GM12878 (cell line): ENCODE measurements at regions of chr13 and their contacts with region 1.

Region 1: DNA sequence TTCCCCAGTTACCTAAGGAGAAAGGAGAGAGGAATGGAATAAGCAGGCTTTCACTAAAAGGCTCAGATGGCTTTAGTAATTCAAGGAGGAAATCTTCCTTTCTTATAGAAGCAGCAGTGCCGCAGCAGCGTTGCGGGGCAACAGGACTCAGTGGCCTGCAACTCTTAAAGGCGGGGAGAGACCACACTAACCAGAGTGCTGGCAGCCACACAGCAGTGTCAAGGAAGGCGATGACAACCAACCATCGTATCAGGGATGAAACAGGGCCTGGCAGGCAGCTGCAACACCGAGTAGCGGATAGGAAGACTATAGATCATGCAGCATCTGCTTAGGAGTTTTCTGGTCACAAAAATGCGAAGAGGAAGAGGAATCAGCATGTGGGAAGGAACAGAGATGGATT is 106.0 kb downstream of the ERCC5 start:
- DNase-seq: no peak
- ATAC-seq: no peak
- H3K4me3 ChIP-seq: no peak overlapping the region
- H3K27ac ChIP-seq: no peak overlapping the region
- H3K4me1 ChIP-seq: no peaks in the 10 kb centered on the region
- H3K27me3 ChIP-seq: no peaks in the 10 kb centered on the region
- CTCF ChIP-seq: no peak
- EP300 ChIP-seq: no peak
- POLR2A ChIP-seq: no peak
- RAD21 ChIP-seq: no peak

Region 2: GRCh38 chr13:102970542-102970941 is 18.7 kb after region 1 on chr13:
- CTCF ChIA-PET with region 1: interaction called, 4 read pairs
- POLR2A ChIA-PET with region 1: no interaction called
- RAD21 ChIA-PET with region 1: no interaction called
- SMC1A ChIA-PET with region 1: interaction called, 20 read pairs
- in situ Hi-C with region 1: no loop called
- intact Hi-C with region 1: no loop called
- DNase-seq: peak; percentile 92
- ATAC-seq: peak; percentile 94
- H3K4me3 ChIP-seq: no peak overlapping the region
- H3K27ac ChIP-seq: peak overlapping the region; percentile 69
- H3K4me1 ChIP-seq: peaks cover 26% of the 10 kb centered on the region
- H3K27me3 ChIP-seq: no peaks in the 10 kb centered on the region
- CTCF ChIP-seq: no peak
- EP300 ChIP-seq: peak; percentile 51 to 83; a peak in 2 of 4 replicates
- POLR2A ChIP-seq: no peak
- RAD21 ChIP-seq: peak; percentile 19; the same call in 1 of the 2 replicates